B cell (primary cell): ENCODE measurements at regions of chr4 and their contacts with region 1.

Region 1: DNA sequence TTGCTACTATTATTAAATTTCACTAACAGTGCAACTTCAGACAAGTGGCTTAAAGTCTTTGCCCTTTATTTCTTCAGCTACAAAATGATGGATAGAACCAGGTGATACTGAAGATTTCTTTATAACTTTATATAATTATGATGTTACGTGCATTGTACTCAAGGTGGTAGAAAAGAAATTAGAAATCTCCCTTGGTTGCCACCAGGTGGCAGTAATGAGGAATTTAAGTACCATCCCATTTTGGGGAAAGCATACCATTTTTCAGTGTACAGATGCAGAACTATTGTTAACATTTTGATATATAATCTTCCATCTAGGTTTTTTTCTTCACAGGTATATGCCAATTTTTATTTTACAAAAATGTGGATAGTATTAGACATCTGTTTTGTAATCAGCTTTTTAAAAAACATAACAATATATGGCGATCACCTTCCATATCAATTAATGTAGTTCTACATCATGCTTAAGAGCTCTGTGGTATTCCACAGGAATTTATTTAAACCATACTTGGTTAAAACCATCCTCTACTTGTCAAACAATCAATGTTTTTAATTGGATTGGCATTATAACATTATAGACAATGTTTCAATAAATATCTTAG is 37.7 kb upstream of the RAB33B start:
- DNase-seq: peak; percentile 69
- ATAC-seq: peak; percentile 21
- H3K4me3 ChIP-seq: no peak overlapping the region
- H3K4me3 Mint-ChIP-seq: no peak overlapping the region
- H3K27ac ChIP-seq: no peak overlapping the region
- H3K27ac Mint-ChIP-seq: no peak overlapping the region
- H3K4me1 ChIP-seq: peaks cover 13 to 14% of the 10 kb centered on the region in 2 donors
- H3K4me1 Mint-ChIP-seq: peaks cover 20% of the 10 kb centered on the region
- H3K27me3 ChIP-seq: no peaks in the 10 kb centered on the region
- H3K27me3 Mint-ChIP-seq: no peaks in the 10 kb centered on the region
- CTCF ChIP-seq: peak; percentile 87

Region 2: GRCh38 chr4:139453371-139454110 is 37.4 kb after region 1 on chr4:
- CTCF ChIA-PET with region 1: interaction called, 5 read pairs
- POLR2A ChIA-PET with region 1: no interaction called
- intact Hi-C with region 1: loop called (anchors 1 kb)
- DNase-seq: peak; percentile 98
- ATAC-seq: peak; percentile 87
- H3K4me3 ChIP-seq: peak overlapping the region; percentile 64 to 99 (median 93)
- H3K4me3 Mint-ChIP-seq: peak overlapping the region; percentile 96
- H3K27ac ChIP-seq: peak overlapping the region; percentile 97 to 98
- H3K27ac Mint-ChIP-seq: peak overlapping the region; percentile 99
- H3K4me1 ChIP-seq: peaks cover 28 to 34% of the 10 kb centered on the region in 2 donors
- H3K4me1 Mint-ChIP-seq: peaks cover 51% of the 10 kb centered on the region
- H3K27me3 ChIP-seq: no peaks in the 10 kb centered on the region
- H3K27me3 Mint-ChIP-seq: no peaks in the 10 kb centered on the region
- CTCF ChIP-seq: peak; percentile 42

Region 3: DNA sequence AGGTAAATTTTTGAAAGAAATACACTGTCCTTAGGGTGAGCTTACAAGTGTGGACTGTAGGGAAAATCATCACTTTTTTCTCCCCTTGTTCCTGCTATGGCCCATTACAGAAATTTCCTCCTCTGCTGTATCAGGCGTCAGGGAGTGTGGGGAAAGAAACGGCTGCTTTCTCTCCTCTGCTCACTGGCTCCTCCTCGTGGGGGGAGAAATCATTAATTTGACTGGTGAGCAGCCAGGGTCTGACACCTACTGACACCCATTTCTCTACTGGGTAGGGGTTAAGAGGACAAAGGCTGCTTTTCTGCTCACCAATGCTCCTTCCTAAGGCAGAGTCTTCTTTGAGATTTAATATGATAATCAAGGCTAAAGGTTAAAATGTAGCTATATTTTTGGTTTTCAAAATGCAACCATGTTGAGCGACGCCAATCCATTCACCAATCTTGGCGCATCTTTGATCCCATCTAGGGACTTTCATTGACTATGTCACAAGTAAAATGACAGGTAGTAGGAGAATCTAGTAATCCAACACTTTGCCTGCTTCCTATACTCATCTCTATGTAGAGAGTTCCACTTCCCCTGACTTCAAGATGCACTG is 114.8 kb after region 1 on chr4:
- CTCF ChIA-PET with region 1: interaction called, 11 read pairs
- POLR2A ChIA-PET with region 1: no interaction called
- intact Hi-C with region 1: loop called (anchors 1 kb)
- DNase-seq: peak; percentile 66
- ATAC-seq: peak; percentile 76
- H3K4me3 ChIP-seq: no peak overlapping the region
- H3K4me3 Mint-ChIP-seq: no peak overlapping the region
- H3K27ac ChIP-seq: no peak overlapping the region
- H3K27ac Mint-ChIP-seq: no peak overlapping the region
- H3K4me1 ChIP-seq: no peaks in the 10 kb centered on the region
- H3K4me1 Mint-ChIP-seq: peaks cover 3% of the 10 kb centered on the region
- H3K27me3 ChIP-seq: no peaks in the 10 kb centered on the region
- H3K27me3 Mint-ChIP-seq: no peaks in the 10 kb centered on the region
- CTCF ChIP-seq: peak; percentile 82

Region 4: GRCh38 chr4:139651282-139652194 is 235.4 kb after region 1 on chr4:
- CTCF ChIA-PET with region 1: no interaction called
- POLR2A ChIA-PET with region 1: no interaction called
- intact Hi-C with region 1: loop called (anchors 1 kb)
- DNase-seq: peak; percentile 82
- ATAC-seq: peak; percentile 81
- H3K4me3 ChIP-seq: no peak overlapping the region
- H3K4me3 Mint-ChIP-seq: no peak overlapping the region
- H3K27ac ChIP-seq: no peak overlapping the region
- H3K27ac Mint-ChIP-seq: no peak overlapping the region
- H3K4me1 ChIP-seq: no peaks in the 10 kb centered on the region
- H3K4me1 Mint-ChIP-seq: peaks cover 4% of the 10 kb centered on the region
- H3K27me3 ChIP-seq: no peaks in the 10 kb centered on the region
- H3K27me3 Mint-ChIP-seq: peaks cover 15% of the 10 kb centered on the region
- CTCF ChIP-seq: peak; percentile 98

Region 5: GRCh38 chr4:139674875-139675550 is 258.8 kb after region 1 on chr4:
- CTCF ChIA-PET with region 1: no interaction called
- POLR2A ChIA-PET with region 1: no interaction called
- intact Hi-C with region 1: no loop called
- DNase-seq: peak; percentile 76
- ATAC-seq: peak; percentile 95
- H3K4me3 ChIP-seq: peak overlapping the region in 1 of 5 experiments; percentile 21
- H3K4me3 Mint-ChIP-seq: peak overlapping the region; percentile 1
- H3K27ac ChIP-seq: peak overlapping the region in 1 of 2 donors; percentile 11
- H3K27ac Mint-ChIP-seq: peak overlapping the region; percentile 1
- H3K4me1 ChIP-seq: peaks cover 10 to 13% of the 10 kb centered on the region in 2 donors
- H3K4me1 Mint-ChIP-seq: peaks cover 13% of the 10 kb centered on the region
- H3K27me3 ChIP-seq: no peaks in the 10 kb centered on the region
- H3K27me3 Mint-ChIP-seq: no peaks in the 10 kb centered on the region
- CTCF ChIP-seq: no peak